ENCODE measurements at regions of chr16 and their contacts with region 1.

Region 1: GRCh38 chr16:27235055-27235937 is 32.0 kb downstream of the KDM8 start:
- DNase-seq: peak; percentile 95 to 99 (median 96)
- H3K4me3 ChIP-seq: peak overlapping the region; percentile 26 to 45
- H3K4me3 Mint-ChIP-seq: peak overlapping the region; percentile 75 to 92 (median 84)
- H3K27ac ChIP-seq: peak overlapping the region; percentile 90
- H3K27ac Mint-ChIP-seq: peak overlapping the region; percentile 97 to 100 (median 100)
- H3K4me1 ChIP-seq: peaks cover 99% of the 10 kb centered on the region
- H3K4me1 Mint-ChIP-seq: peaks cover 72 to 99% (median 84%) of the 10 kb centered on the region in 4 donors
- H3K27me3 ChIP-seq: no peaks in the 10 kb centered on the region
- H3K27me3 Mint-ChIP-seq: no peaks in the 10 kb centered on the region

Region 2: GRCh38 chr16:27005386-27005785 is 229.9 kb before region 1 on chr16:
- CTCF ChIA-PET with region 1: no interaction called
- POLR2A ChIA-PET with region 1: no interaction called
- intact Hi-C with region 1: no loop called
- DNase-seq: no peak
- H3K4me3 ChIP-seq: no peak overlapping the region
- H3K4me3 Mint-ChIP-seq: no peak overlapping the region
- H3K27ac ChIP-seq: no peak overlapping the region
- H3K27ac Mint-ChIP-seq: no peak overlapping the region
- H3K4me1 ChIP-seq: no peaks in the 10 kb centered on the region
- H3K4me1 Mint-ChIP-seq: no peaks in the 10 kb centered on the region
- H3K27me3 ChIP-seq: no peaks in the 10 kb centered on the region
- H3K27me3 Mint-ChIP-seq: peaks cover 19 to 23% of the 10 kb centered on the region in 2 donors

Region 3: GRCh38 chr16:27179500-27180072 is 55.7 kb before region 1 on chr16:
- CTCF ChIA-PET with region 1: interaction called, 206 read pairs
- POLR2A ChIA-PET with region 1: interaction called, 107 read pairs
- intact Hi-C with region 1: loop called (anchors 1 kb)
- DNase-seq: peak; percentile 81 to 86 (median 85)
- H3K4me3 ChIP-seq: no peak overlapping the region
- H3K4me3 Mint-ChIP-seq: peak overlapping the region in 3 of 8 donors; percentile 0 to 64 (median 22)
- H3K27ac ChIP-seq: no peak overlapping the region
- H3K27ac Mint-ChIP-seq: peak overlapping the region; percentile 1 to 93 (median 85)
- H3K4me1 ChIP-seq: peaks cover 25% of the 10 kb centered on the region
- H3K4me1 Mint-ChIP-seq: peaks cover 21 to 46% (median 31%) of the 10 kb centered on the region in 4 donors
- H3K27me3 ChIP-seq: no peaks in the 10 kb centered on the region
- H3K27me3 Mint-ChIP-seq: no peaks in the 10 kb centered on the region

Region 4: DNA sequence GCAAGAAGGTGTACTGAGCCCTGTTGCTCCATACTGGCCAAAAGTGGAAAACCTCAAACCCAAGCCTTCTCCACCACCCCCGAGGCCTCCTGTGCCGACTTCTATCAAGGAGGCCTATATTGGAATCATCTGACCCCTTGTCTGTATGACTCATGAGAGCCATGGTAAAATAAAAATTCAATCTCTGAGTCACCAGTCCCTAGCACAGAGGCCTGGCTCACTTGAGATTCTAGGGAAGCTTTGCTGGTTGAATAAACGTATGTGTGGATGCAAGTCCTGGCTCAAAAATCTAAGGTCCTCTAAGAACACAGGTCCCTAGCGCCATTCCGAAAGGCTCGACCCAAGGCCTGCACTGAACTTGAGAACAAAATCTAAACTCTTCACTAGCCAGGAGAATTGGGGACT is 18.2 kb after region 1 on chr16:
- CTCF ChIA-PET with region 1: interaction called, 15 read pairs
- POLR2A ChIA-PET with region 1: interaction called, 47 read pairs
- intact Hi-C with region 1: no loop called
- DNase-seq: no peak
- H3K4me3 ChIP-seq: no peak overlapping the region
- H3K4me3 Mint-ChIP-seq: peak overlapping the region in 5 of 8 donors; percentile 17 to 63 (median 50)
- H3K27ac ChIP-seq: no peak overlapping the region
- H3K27ac Mint-ChIP-seq: peak overlapping the region in 4 of 7 donors; percentile 30 to 68 (median 60)
- H3K4me1 ChIP-seq: peaks cover 23% of the 10 kb centered on the region
- H3K4me1 Mint-ChIP-seq: peaks cover 34 to 54% (median 46%) of the 10 kb centered on the region in 4 donors
- H3K27me3 ChIP-seq: no peaks in the 10 kb centered on the region
- H3K27me3 Mint-ChIP-seq: no peaks in the 10 kb centered on the region

Region 5: DNA sequence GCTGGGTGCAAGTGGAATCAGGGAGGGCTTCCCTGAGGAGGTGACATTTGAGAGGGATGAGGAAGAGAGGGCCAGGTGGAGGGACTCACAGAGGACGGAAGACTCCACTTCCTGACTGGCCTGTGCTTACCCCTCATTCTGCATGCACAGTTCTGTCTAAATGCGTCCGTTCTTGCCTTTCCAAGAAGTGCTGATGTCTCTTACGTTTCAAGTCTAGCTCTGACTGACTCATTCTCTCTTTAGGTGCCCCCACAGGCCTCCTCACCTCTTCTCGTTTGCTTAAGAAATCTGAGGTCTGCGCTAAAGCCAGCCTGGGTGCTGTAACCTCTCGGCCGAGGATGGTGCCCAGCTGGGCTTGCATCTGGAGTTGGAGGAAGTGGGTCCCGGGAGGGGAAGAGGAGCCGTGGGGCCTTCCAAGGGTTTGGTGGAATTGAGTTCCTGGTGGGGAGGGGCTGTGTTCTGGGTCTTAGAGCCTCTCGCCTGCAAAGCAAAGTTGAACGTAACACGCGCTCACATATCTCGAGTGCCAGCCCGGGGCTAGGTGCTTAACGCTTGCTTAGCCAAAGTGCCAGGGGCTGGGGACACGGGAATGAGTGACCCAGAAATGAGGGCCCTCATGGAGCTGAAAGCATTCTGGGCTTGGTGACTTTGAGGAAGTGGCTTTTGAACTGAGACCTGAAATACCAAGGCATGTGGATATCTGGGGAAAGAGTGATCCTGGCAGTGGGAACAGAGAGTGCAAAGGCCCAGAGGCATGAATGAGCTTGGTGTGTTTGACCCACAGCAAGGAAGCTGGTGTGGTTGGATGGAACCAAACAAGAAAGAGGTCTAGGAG is 83.3 kb after region 1 on chr16:
- CTCF ChIA-PET with region 1: interaction called, 61 read pairs
- POLR2A ChIA-PET with region 1: interaction called, 144 read pairs
- intact Hi-C with region 1: loop called (anchors 1 kb)
- DNase-seq: peak; percentile 32 to 78 (median 35)
- H3K4me3 ChIP-seq: peak overlapping the region; percentile 8 to 37
- H3K4me3 Mint-ChIP-seq: peak overlapping the region; percentile 89 to 98 (median 94)
- H3K27ac ChIP-seq: peak overlapping the region; percentile 96
- H3K27ac Mint-ChIP-seq: peak overlapping the region; percentile 94 to 99 (median 99)
- H3K4me1 ChIP-seq: peaks cover 82% of the 10 kb centered on the region
- H3K4me1 Mint-ChIP-seq: peaks cover 59 to 90% (median 78%) of the 10 kb centered on the region in 4 donors
- H3K27me3 ChIP-seq: no peaks in the 10 kb centered on the region
- H3K27me3 Mint-ChIP-seq: no peaks in the 10 kb centered on the region

Region 6: DNA sequence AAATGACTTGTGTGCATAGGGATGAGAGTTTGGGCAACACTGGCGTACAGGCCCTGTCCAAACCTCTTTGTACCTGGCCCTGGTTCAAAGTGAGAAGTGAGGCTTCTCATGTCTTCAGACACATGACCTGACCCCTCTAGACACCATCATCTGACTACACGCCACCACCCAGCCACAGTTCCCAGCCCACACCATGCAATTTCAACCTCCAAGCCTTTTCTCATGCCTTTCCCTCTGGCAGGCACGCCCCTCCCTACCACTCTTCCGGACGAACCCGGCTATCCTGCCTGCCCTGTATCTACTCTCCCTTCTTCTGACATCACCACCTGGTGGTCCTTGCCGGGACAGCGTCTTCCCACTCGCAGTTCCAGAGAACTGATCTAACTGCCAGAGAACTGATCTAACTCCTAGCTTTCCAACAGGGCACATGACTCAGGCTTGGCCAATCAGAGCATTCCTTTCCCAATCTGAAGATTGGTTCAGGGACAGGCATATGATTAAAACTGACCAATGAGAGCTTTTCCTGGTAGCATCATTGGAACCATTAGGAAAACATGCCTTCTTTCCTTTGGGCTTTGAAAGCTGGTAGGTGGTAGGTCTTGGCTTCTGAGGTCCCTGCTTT is 139.6 kb after region 1 on chr16:
- CTCF ChIA-PET with region 1: interaction called, 213 read pairs
- POLR2A ChIA-PET with region 1: interaction called, 239 read pairs
- intact Hi-C with region 1: no loop called
- DNase-seq: peak in 3 of 5 donors; percentile 15 to 60 (median 28)
- H3K4me3 ChIP-seq: no peak overlapping the region
- H3K4me3 Mint-ChIP-seq: no peak overlapping the region
- H3K27ac ChIP-seq: no peak overlapping the region
- H3K27ac Mint-ChIP-seq: no peak overlapping the region
- H3K4me1 ChIP-seq: peaks cover 67% of the 10 kb centered on the region
- H3K4me1 Mint-ChIP-seq: peaks cover 21 to 33% (median 26%) of the 10 kb centered on the region in 4 donors
- H3K27me3 ChIP-seq: no peaks in the 10 kb centered on the region
- H3K27me3 Mint-ChIP-seq: no peaks in the 10 kb centered on the region

Region 7: GRCh38 chr16:27455700-27456099 is 220.4 kb after region 1 on chr16:
- CTCF ChIA-PET with region 1: interaction called, 27 read pairs
- POLR2A ChIA-PET with region 1: interaction called, 27 read pairs
- intact Hi-C with region 1: loop called (anchors 1 kb)
- DNase-seq: peak in 3 of 5 donors; percentile 9 to 55 (median 27)
- H3K4me3 ChIP-seq: no peak overlapping the region
- H3K4me3 Mint-ChIP-seq: peak overlapping the region in 3 of 8 donors; percentile 12 to 41 (median 26)
- H3K27ac ChIP-seq: no peak overlapping the region
- H3K27ac Mint-ChIP-seq: peak overlapping the region in 6 of 7 donors; percentile 58 to 93 (median 68)
- H3K4me1 ChIP-seq: peaks cover 55% of the 10 kb centered on the region
- H3K4me1 Mint-ChIP-seq: peaks cover 26 to 69% (median 54%) of the 10 kb centered on the region in 4 donors
- H3K27me3 ChIP-seq: no peaks in the 10 kb centered on the region
- H3K27me3 Mint-ChIP-seq: no peaks in the 10 kb centered on the region

Measured in CD4-positive, alpha-beta memory T cell (primary cell).